ENCODE measurements at regions of chr3 and their contacts with region 1.

Region 1: DNA sequence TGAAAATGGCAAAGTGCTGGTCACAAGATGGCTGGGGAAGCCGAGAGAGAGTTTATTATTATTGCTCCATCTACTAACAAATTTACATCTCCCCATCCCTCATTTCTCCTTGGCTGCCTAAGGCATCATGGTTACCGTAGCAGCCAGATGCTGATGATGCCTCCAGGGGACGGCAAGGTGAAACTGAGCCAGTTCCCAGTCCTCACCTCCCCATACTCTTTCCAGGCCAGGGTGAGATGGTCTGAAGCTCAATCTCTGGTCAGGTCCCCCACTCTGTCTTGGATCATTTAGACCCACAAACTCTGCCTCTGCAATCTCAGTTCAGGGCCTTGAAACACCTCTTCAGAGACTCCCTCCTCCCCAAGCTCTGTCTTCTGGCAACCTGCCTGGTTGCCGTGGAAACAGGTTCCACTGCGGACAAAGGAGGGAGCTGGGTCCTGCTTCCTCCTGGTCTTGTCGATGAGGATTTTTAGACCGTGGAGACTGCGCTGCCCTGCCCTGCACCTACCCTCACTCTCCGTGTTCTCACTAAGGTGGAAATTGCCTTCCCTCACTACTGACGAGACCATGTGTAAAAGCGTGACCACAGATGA is at the start of gene RTP1:
- DNase-seq: no peak
- H3K4me3 ChIP-seq: no peak within 1 kb of the TSS
- H3K27ac ChIP-seq: no peak within 1 kb of the TSS
- H3K4me1 ChIP-seq: peaks cover 0 to 5% (median 1%) of the 10 kb centered on the region in 4 experiments; a peak in 2 of 7 replicates
- H3K27me3 ChIP-seq: no peaks in the 10 kb centered on the region
- CTCF ChIP-seq: no peak
- EP300 ChIP-seq: no peak
- POLR2A ChIP-seq: no peak
- RAD21 ChIP-seq: no peak
- total RNA-seq, gene RTP1: 3.0 and 3.2 TPM in 2 replicates

Region 2: DNA sequence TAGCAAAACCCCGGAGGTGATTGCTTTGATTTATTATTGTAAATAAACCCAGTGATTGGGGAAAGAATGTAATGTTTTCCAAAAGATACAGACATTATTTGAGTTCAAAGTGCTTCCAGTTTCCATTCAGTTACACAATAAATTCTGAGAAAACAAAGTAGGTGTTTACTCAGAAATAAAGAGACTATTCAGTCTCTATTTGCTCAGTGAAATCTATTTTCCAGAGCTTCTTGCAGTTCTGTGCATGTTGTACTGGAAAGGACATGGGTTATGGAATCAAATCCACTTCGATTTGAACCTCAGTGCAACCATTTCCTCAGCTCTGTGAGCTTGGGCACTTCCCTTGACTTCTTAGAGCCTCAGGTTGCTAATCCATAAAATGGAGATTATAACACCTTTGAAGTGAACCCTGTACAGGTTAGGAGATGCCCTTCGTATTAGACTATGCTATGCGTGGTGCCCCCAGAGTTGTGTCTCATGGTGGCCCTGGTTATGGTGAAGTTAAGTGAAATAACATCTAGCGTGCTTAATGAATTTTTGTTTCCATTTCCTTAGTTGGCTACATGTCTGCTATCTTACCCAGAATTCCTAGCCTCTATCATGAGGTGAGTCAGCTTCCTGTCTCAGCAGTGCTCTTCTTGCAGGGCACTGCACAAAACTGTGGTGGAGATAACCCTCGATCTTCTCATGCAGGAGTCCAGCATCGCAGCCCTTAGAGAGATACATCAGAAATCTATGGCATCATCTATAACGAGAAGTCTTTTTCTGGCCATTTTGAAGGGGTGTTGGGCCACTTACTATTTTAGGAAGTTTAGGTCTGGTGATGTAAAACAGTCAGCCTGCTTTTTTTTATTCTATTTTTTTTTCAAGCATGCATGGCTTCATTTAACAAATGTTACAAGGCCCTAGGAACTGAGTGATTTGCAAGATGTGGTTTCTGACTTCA is 155.5 kb before region 1 on chr3:
- CTCF ChIA-PET with region 1: no interaction called
- POLR2A ChIA-PET with region 1: no interaction called
- DNase-seq: no peak
- H3K4me3 ChIP-seq: no peak overlapping the region
- H3K27ac ChIP-seq: no peak overlapping the region; the same call in 1 of the 2 replicates
- H3K4me1 ChIP-seq: no peaks in the 10 kb centered on the region
- H3K27me3 ChIP-seq: no peaks in the 10 kb centered on the region
- CTCF ChIP-seq: no peak
- EP300 ChIP-seq: no peak
- POLR2A ChIP-seq: no peak
- RAD21 ChIP-seq: no peak

Region 3: GRCh38 chr3:187210545-187211327 is 13.6 kb after region 1 on chr3:
- CTCF ChIA-PET with region 1: interaction called, 4 read pairs
- POLR2A ChIA-PET with region 1: interaction called, 10 read pairs
- DNase-seq: no peak
- H3K4me3 ChIP-seq: no peak overlapping the region
- H3K27ac ChIP-seq: no peak overlapping the region
- H3K4me1 ChIP-seq: peaks cover 3 to 14% (median 7%) of the 10 kb centered on the region in 4 experiments; a peak in 4 of 7 replicates
- H3K27me3 ChIP-seq: no peaks in the 10 kb centered on the region
- CTCF ChIP-seq: no peak
- EP300 ChIP-seq: no peak
- POLR2A ChIP-seq: no peak
- RAD21 ChIP-seq: no peak

Measured in H1 (cell line).